ENCODE measurements at regions of chr21 and their contacts with region 1.

Region 1: GRCh38 chr21:44723177-44724131 is 12.1 kb upstream of the TSPEAR start:
- DNase-seq: no peak
- ATAC-seq: peak in 1 of 4 donors; percentile 29
- H3K4me3 ChIP-seq: peak overlapping the region in 1 of 12 donors; percentile 25
- H3K27ac ChIP-seq: no peak overlapping the region
- H3K4me1 ChIP-seq: peaks cover 0 to 11% (median 0%) of the 10 kb centered on the region in 12 donors
- H3K27me3 ChIP-seq: peaks cover 10 to 63% (median 23%) of the 10 kb centered on the region in 9 donors
- CTCF ChIP-seq: no peak
- POLR2A ChIP-seq: no peak

Region 2: DNA sequence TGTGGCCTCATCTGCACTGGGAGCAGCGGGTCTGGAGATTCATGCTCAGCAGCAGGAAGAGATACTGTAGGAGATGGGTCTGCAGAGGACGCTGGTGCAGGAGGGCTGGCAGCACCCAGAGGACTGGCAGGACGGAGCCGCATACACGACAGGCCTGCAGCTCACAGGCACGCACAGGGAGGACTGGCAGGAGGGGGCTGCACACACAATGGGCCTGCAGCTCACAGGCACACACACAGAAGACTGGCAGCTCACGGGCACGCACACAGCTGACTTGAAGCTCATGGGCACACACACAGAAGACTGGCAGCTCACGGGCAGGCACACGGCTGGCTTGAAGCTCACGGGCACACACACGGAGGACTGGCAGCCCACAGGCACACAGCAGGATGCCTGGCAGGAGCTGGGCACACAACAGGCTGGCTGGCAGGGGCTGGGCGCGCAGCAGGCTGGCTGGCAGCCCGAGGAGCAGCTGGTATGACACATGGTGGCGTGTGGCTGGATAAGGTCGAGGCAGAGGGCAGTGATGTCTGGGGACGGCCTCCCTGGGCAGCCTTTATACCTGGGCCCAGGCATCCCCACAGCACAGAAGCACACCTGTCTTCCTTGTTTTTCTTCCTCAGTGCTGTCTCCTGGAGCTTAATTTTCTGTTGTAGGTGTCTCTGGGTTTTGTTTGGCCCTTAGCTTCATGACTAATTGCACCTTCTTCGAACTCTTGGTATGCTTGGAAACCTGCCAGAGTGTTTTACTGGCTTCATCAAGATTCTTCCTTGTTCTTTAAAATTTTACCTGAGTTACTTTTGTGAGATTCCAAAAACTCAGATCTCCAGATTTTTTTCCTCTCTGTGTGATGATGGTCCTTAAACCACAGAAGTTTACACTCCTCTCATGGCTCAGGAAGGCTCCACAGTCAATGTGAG is 56.8 kb before region 1 on chr21 and contains the start of gene KRTAP12-2:
- intact Hi-C with region 1: loop called in 1 of 10 experiments (anchors 10 kb)
- DNase-seq: peak in 4 of 5 donors; percentile 29 to 85 (median 66)
- ATAC-seq: peak; percentile 93 to 99 (median 98)
- H3K4me3 ChIP-seq: no peak within 1 kb of the TSS
- H3K27ac ChIP-seq: peak within 1 kb of the TSS in 1 of 12 donors; percentile 31
- H3K4me1 ChIP-seq: no peaks in the 10 kb centered on the region
- H3K27me3 ChIP-seq: no peaks in the 10 kb centered on the region
- CTCF ChIP-seq: no peak
- POLR2A ChIP-seq: no peak
- total RNA-seq, gene KRTAP12-2: not detected